Activated CD4-positive, alpha-beta T cell treated with anti-CD3 and anti-CD28 coated beads for 36 hours (primary cell): ENCODE measurements at regions of chr1 and their contacts with region 1.

Region 1: GRCh38 chr1:100351095-100351891 is 1.0 kb upstream of the CDC14A start:
- DNase-seq: peak; percentile 94
- ATAC-seq: peak; percentile 77
- H3K4me3 Mint-ChIP-seq: peak overlapping the region; percentile 97
- H3K27ac Mint-ChIP-seq: peak overlapping the region; percentile 97
- H3K4me1 Mint-ChIP-seq: peaks cover 25% of the 10 kb centered on the region
- H3K27me3 Mint-ChIP-seq: no peaks in the 10 kb centered on the region

Region 2: GRCh38 chr1:100132566-100133477 is 218.5 kb before region 1 on chr1 and contains the starts of genes SASS6 and TRMT13:
- CTCF ChIA-PET with region 1: interaction called, 3 read pairs
- POLR2A ChIA-PET with region 1: interaction called, 3 read pairs
- intact Hi-C with region 1: loop called (anchors 1 to 2 kb)
- DNase-seq: peak; percentile 97
- ATAC-seq: peak; percentile 94
- H3K4me3 Mint-ChIP-seq: peak within 1 kb of the TSS; percentile 98
- H3K27ac Mint-ChIP-seq: peak within 1 kb of the TSS; percentile 98
- H3K4me1 Mint-ChIP-seq: peaks cover 32% of the 10 kb centered on the region
- H3K27me3 Mint-ChIP-seq: no peaks in the 10 kb centered on the region
- total RNA-seq, gene SASS6: 14.2 to 17.4 TPM
- total RNA-seq, gene TRMT13: 19.0 to 20.2 TPM

Region 3: GRCh38 chr1:100178091-100178490 is 173.2 kb before region 1 on chr1 and contains the start of gene LRRC39:
- CTCF ChIA-PET with region 1: no interaction called
- POLR2A ChIA-PET with region 1: no interaction called
- intact Hi-C with region 1: no loop called
- DNase-seq: no peak
- ATAC-seq: no peak
- H3K4me3 Mint-ChIP-seq: no peak within 1 kb of the TSS
- H3K27ac Mint-ChIP-seq: no peak within 1 kb of the TSS
- H3K4me1 Mint-ChIP-seq: no peaks in the 10 kb centered on the region
- H3K27me3 Mint-ChIP-seq: no peaks in the 10 kb centered on the region
- total RNA-seq, gene LRRC39: 0.32 to 0.51 TPM

Region 4: GRCh38 chr1:100299521-100300222 is 51.6 kb before region 1 on chr1:
- CTCF ChIA-PET with region 1: interaction called, 5 read pairs
- POLR2A ChIA-PET with region 1: no interaction called
- intact Hi-C with region 1: loop called in 1 of 2 experiments (anchors 2 kb)
- DNase-seq: peak; percentile 39
- ATAC-seq: peak; percentile 86
- H3K4me3 Mint-ChIP-seq: no peak overlapping the region
- H3K27ac Mint-ChIP-seq: no peak overlapping the region
- H3K4me1 Mint-ChIP-seq: peaks cover 8% of the 10 kb centered on the region
- H3K27me3 Mint-ChIP-seq: no peaks in the 10 kb centered on the region

Region 5: DNA sequence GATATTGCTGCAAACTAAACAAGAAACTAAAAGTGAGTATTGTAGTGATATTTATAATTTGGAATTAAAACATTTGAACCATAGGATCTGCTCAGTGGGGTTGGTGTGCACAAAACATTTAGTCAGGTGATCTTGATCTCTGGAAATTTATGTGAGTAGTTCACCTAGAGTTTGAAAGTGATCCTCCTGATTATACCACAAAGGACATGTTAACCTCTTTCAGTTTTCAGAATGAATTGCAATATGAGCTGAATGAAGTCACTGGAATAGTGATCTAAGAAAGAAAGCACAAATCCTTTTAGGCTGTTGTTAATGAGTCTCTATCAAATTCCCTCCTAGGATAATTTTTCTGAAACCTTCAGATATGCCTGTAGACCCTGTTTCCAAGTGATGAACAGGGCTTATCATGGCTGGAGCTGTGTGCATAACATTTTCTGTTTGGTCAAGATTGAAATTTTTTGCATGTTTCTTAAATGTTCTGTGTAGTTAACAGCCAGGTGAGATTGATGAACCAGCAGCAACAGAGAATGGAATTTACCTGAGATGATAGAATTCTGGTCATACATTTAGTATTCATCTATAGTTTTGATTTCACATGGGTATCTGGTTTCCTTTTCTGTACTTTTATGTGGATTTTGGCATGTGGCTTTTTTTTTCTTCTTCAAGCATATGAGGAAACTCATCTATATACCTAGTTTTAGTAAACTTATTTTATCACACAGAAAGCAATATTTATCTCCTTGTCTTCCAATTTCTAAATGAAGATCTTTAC is 26.5 kb after region 1 on chr1:
- CTCF ChIA-PET with region 1: interaction called, 9 read pairs
- POLR2A ChIA-PET with region 1: no interaction called
- intact Hi-C with region 1: loop called (anchors 1 kb)
- DNase-seq: no peak
- ATAC-seq: peak; percentile 89
- H3K4me3 Mint-ChIP-seq: no peak overlapping the region
- H3K27ac Mint-ChIP-seq: peak overlapping the region; percentile 84
- H3K4me1 Mint-ChIP-seq: peaks cover 62% of the 10 kb centered on the region
- H3K27me3 Mint-ChIP-seq: peaks cover 3% of the 10 kb centered on the region

Region 6: DNA sequence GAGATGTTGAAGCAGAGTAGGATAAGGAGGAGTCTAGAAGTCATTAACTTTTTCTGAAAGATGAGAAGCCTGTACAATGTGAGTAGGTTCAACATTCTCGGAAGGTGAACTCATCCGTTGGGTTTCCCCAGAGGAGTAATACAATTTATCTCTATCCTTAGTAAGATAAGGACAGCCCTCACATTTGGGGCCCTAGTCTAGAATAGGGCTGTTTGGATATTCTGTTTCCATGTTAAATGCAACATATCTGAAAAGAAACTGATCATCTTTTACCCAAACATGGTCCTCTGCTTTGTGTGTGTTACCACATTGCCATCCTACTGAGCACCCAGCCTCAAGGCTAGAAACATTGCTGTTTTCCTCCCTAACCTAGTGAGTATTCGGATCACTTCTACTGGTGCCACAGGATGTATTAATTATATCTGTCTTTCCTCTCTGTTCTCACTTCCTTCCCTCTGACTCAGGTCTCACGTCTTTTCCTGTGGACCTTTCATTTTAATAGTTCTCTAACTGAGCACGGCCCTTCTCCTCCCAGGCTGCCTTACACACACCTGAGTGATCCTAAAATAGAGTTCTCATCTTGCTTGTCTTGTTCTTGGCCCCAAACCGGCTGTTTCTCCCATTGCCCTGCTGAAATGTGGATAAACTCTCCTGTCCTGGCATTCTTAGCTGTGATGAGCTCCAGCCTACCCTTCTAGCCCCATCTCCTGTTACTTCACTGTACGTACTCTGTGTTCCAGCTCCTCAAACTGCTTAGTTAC is 92.7 kb after region 1 on chr1:
- CTCF ChIA-PET with region 1: interaction called, 15 read pairs
- POLR2A ChIA-PET with region 1: interaction called, 4 read pairs
- intact Hi-C with region 1: loop called (anchors 1 kb)
- DNase-seq: peak; percentile 49
- ATAC-seq: peak; percentile 79
- H3K4me3 Mint-ChIP-seq: peak overlapping the region; percentile 68
- H3K27ac Mint-ChIP-seq: peak overlapping the region; percentile 93
- H3K4me1 Mint-ChIP-seq: peaks cover 84% of the 10 kb centered on the region
- H3K27me3 Mint-ChIP-seq: no peaks in the 10 kb centered on the region

Region 7: DNA sequence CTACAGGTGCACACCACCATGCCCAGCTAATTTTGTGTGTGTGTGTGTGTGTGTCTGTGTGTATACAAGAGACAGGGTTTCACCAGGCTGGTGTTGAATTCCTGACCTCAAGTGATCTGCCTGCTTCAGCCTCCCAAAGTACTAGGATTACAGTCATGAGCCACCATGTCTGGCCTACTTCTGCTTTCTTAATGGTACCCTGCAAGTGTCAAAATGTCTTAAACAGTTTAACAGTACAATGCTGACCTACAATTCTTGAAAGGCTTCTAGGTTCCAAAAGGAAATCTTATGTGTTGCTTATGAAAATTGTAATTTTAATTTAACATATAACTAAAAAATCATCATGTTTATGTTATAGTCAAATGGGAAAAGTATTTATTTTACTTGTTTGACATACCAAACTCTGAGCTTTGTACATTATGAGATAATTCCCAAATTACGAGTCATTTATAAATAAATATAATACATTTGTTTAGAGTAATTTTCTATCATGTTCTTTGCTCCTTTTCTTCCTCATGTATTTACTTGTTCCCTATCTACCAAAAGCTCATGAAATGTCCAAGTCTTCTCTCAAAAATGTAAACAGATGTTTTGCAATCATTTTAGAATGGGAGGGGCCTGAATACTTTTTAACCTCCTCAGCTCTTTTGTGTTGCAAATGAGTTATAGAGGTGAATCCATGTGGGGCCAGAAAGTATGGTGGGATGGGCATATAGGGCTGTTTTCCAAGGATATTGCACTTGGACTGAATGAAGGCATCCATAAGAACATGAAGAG is 359.8 kb after region 1 on chr1:
- CTCF ChIA-PET with region 1: no interaction called
- POLR2A ChIA-PET with region 1: no interaction called
- intact Hi-C with region 1: no loop called
- DNase-seq: no peak
- ATAC-seq: no peak
- H3K4me3 Mint-ChIP-seq: no peak overlapping the region
- H3K27ac Mint-ChIP-seq: no peak overlapping the region
- H3K4me1 Mint-ChIP-seq: peaks cover 6% of the 10 kb centered on the region
- H3K27me3 Mint-ChIP-seq: peaks cover 21% of the 10 kb centered on the region

Region 8: DNA sequence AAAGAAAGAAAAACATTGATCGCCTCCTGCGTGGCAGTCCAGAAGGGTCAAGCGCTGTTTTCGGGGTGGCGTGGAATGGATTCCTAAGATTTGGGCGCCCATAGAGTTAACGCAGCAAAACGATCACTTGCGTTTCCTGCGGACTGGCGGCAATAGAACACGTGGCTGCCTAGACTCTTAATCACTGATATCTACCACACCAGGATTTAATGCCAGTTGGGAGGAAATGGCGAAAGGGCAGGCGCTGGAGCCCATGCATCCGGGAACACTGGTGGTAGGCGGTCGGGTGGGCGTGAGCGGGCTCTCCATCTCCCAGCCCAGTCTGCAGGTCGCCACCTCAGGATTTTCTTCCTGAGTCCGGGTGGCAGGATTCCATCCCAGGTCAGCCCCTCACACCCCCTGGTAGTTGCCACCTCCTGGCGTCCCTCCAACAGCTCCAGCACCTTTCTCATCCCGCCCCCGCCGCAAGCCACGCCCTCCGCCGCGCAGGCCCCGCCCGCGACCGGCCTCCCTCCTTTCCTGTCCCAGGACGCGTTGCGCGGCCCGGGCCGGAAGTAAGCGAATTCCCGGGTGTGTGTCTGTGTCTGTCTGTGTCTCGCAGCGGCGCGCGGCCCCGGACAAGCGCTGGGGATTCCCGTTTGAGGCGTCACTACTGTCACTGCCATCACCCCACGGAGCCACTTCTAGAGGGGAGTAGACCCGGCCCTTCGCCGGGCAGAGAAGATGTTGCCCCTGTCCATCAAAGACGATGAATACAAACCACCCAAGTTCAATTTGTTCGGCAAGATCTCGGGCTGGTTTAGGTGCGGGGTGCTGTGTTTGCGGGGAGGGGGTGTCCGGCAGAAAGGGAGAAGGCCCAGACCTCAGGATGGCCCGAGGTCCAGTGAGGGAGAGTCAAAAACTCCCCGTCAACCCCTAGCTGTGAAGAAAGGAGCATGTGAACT is 544.5 kb after region 1 on chr1 and contains the start of gene SLC30A7:
- CTCF ChIA-PET with region 1: no interaction called
- POLR2A ChIA-PET with region 1: no interaction called
- intact Hi-C with region 1: loop called (anchors 2 to 10 kb)
- DNase-seq: peak; percentile 98
- ATAC-seq: peak; percentile 81
- H3K4me3 Mint-ChIP-seq: peak within 1 kb of the TSS; percentile 100
- H3K27ac Mint-ChIP-seq: peak within 1 kb of the TSS; percentile 100
- H3K4me1 Mint-ChIP-seq: peaks cover 44% of the 10 kb centered on the region
- H3K27me3 Mint-ChIP-seq: no peaks in the 10 kb centered on the region
- total RNA-seq, gene SLC30A7: 33.2 to 34.6 TPM